AG04449 (cell line): ENCODE measurements at regions of chr2 and their contacts with region 1.

Region 1: GRCh38 chr2:75634945-75635344 is 11.6 kb upstream of the MRPL19 start:
- DNase-seq: no peak
- H3K4me3 ChIP-seq: no peak overlapping the region
- CTCF ChIP-seq: no peak

Region 2: GRCh38 chr2:75619956-75620740 is 14.8 kb before region 1 on chr2:
- CTCF ChIA-PET with region 1: interaction called, 20 read pairs
- POLR2A ChIA-PET with region 1: no interaction called
- DNase-seq: no peak
- H3K4me3 ChIP-seq: no peak overlapping the region
- CTCF ChIP-seq: no peak

Region 3: DNA sequence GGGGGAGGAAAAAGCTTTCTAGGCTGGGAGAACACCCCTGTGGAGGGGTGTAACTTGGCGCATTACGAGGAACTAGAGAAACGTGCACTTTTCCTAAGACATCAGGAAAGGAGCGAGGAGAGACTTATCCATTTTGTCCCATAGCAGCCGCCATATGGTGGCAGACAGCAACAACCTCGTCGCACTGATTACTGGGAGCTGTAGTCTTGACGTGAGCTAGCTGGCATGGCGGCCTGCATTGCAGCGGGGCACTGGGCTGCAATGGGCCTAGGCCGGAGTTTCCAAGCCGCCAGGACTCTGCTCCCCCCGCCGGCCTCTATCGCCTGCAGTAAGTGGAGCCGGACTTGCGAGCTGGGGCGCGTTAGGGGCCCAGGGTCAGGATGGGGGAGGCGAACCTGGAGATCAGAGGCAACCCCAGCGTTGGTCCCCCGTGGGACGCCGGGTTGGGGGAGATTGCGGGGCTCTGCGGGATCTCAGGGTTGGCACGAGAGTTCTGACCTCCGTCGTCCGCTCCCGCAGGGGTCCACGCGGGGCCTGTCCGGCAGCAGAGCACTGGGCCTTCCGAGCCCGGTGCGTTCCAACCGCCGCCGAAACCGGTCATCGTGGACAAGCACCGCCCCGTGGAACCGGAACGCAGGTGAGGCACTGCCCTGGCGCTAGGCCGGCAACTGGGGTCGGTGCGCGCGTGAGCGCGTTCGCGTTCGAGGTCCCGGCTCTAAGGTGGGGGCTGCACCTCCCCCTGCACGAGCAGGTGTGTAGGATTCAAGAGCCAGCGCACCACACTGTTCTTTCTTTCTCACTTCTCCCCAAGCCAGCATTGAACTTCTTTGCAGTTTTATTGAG is 11.9 kb after region 1 on chr2 and contains the start of gene MRPL19:
- CTCF ChIA-PET with region 1: interaction called, 77 read pairs
- POLR2A ChIA-PET with region 1: no interaction called
- DNase-seq: peak; percentile 60
- H3K4me3 ChIP-seq: peak within 1 kb of the TSS; percentile 95
- CTCF ChIP-seq: no peak